ENCODE measurements at regions of chr5 and their contacts with region 1.

Region 1: GRCh38 chr5:174311531-174312269 is 266.2 kb downstream of the NSG2 start:
- DNase-seq: peak; percentile 57 to 93 (median 86)

Region 2: DNA sequence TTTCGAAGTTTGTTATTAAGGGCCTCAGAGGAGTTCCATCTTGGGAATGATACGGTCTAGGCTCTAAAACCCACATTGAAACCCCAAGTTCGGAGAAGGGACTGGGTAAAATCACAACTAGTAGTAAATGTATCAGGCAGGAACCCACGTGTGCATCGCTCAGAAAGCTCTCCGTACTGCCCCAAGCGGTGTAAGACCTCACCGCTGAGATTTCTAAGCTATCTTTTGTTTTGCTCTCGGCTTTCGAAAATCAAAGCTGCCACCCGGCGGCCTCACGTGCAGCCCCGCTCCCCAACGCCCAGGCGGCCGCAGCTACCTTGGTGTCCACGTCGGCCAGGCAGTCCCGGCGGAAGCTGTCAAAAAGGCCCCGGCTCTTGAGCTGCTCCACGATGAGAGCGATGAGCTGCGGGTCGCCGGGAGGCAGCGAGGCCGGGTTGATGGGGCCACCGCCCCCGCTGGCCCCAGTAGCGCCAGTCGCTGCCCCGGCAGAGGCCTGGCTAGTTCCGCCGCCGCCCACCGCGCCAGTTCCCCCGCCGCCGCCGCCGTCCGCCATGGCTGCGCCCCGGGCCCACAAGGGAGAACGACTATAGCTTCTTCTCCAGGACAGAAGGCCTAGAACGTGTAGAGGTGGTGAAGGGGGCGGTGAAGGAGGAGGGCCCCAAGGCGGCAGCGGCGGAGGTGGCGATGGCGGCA is 695.7 kb before region 1 on chr5:
- intact Hi-C with region 1: loop called (anchors 10 kb)
- DNase-seq: peak; percentile 38 to 89 (median 76)

Region 3: DNA sequence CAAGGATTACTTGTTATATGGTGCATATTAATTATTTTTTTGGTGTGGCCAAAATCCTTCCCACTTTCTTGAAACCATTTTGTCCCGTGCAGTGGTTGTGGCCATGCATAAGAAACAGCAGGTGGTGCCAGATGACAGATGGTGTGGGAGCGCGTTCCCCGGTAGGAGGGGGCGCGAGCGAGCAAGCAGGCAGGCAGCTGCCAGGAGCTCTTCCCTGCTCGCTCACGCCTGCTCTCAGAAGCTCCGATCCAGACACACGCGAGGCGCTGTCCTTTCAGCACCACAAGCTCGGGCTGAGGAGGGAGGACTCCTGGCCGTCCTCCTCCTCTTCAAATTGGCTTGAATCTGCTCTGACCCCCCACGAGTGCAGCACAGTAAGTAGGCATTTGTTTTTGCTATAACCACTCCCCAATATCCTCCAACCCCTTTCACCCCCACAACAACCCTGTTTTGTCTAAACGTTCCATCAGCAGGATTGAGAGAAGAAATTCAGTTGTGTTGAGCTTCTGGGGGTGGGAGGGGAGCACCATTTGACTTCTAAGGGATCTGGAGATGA is 266.2 kb before region 1 on chr5 and contains the start of gene NSG2:
- intact Hi-C with region 1: loop called (anchors 2 kb)
- DNase-seq: peak; percentile 79 to 98 (median 92)

Region 4: DNA sequence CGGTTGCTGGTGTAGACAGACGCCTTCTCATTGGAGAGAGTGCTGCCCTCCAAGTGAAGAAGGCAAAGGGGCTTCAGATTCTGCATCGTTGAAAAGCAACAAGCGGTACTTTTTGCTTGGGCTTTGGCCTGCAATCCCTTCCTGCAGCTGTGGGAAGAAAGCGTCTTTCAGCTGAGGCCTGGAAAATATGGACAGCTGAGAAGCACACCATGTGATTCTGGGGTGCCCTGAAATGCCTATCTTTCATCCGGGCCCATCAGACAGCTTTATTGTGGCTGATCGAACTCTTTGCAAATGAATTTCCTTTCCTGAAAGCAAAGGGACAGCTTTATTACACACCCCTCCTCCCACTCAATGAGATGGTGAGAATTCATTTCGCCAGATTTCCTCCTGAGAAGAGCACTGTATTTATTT is 192.2 kb before region 1 on chr5:
- intact Hi-C with region 1: loop called (anchors 10 kb)
- DNase-seq: peak in 32 of 42 donors; percentile 30 to 82 (median 64)

Region 5: GRCh38 chr5:174134574-174134973 is 177.1 kb before region 1 on chr5:
- intact Hi-C with region 1: no loop called
- DNase-seq: peak in 1 of 42 donors; percentile 4

Region 6: GRCh38 chr5:174409070-174409469 is 97.4 kb after region 1 on chr5:
- intact Hi-C with region 1: no loop called
- DNase-seq: no peak